Activated CD4-positive, alpha-beta T cell treated with anti-CD3 and anti-CD28 coated beads, Interleukin-2, amount 10 ng/mL, durations not matched to agents 24 days and 14 days (primary cell): ENCODE measurements at regions of chr3 and their contacts with region 1.

Region 1: GRCh38 chr3:56801662-56802377 is at the start of gene ARHGEF3:
- DNase-seq: peak; percentile 94
- H3K4me3 Mint-ChIP-seq: peak within 1 kb of the TSS; percentile 97
- H3K27ac Mint-ChIP-seq: peak within 1 kb of the TSS; percentile 87
- H3K4me1 Mint-ChIP-seq: peaks cover 47% of the 10 kb centered on the region
- H3K27me3 Mint-ChIP-seq: no peaks in the 10 kb centered on the region
- total RNA-seq, gene ARHGEF3: 52.7 and 54.4 TPM in 2 replicates

Region 2: GRCh38 chr3:56556908-56557830 is 244.7 kb before region 1 on chr3 and contains the start of gene CCDC66:
- intact Hi-C with region 1: loop called (anchors 5 kb)
- DNase-seq: peak; percentile 97
- H3K4me3 Mint-ChIP-seq: peak within 1 kb of the TSS; percentile 92
- H3K27ac Mint-ChIP-seq: peak within 1 kb of the TSS; percentile 94
- H3K4me1 Mint-ChIP-seq: peaks cover 19% of the 10 kb centered on the region
- H3K27me3 Mint-ChIP-seq: peaks cover 19% of the 10 kb centered on the region
- total RNA-seq, gene CCDC66: 36.8 and 37.8 TPM in 2 replicates

Region 3: GRCh38 chr3:56702490-56703315 is 99.1 kb before region 1 on chr3:
- intact Hi-C with region 1: loop called (anchors 1 kb)
- DNase-seq: peak; percentile 87
- H3K4me3 Mint-ChIP-seq: no peak overlapping the region
- H3K27ac Mint-ChIP-seq: no peak overlapping the region
- H3K4me1 Mint-ChIP-seq: peaks cover 27% of the 10 kb centered on the region
- H3K27me3 Mint-ChIP-seq: no peaks in the 10 kb centered on the region

Region 4: GRCh38 chr3:56753206-56753820 is 48.5 kb before region 1 on chr3:
- intact Hi-C with region 1: loop called (anchors 1 kb)
- DNase-seq: peak; percentile 82
- H3K4me3 Mint-ChIP-seq: peak overlapping the region; percentile 67
- H3K27ac Mint-ChIP-seq: peak overlapping the region; percentile 80
- H3K4me1 Mint-ChIP-seq: peaks cover 62% of the 10 kb centered on the region
- H3K27me3 Mint-ChIP-seq: no peaks in the 10 kb centered on the region

Region 5: GRCh38 chr3:56772952-56773938 is 28.6 kb before region 1 on chr3:
- intact Hi-C with region 1: no loop called
- DNase-seq: no peak
- H3K4me3 Mint-ChIP-seq: no peak overlapping the region
- H3K27ac Mint-ChIP-seq: peak overlapping the region; percentile 58
- H3K4me1 Mint-ChIP-seq: peaks cover 56% of the 10 kb centered on the region
- H3K27me3 Mint-ChIP-seq: no peaks in the 10 kb centered on the region

Region 6: DNA sequence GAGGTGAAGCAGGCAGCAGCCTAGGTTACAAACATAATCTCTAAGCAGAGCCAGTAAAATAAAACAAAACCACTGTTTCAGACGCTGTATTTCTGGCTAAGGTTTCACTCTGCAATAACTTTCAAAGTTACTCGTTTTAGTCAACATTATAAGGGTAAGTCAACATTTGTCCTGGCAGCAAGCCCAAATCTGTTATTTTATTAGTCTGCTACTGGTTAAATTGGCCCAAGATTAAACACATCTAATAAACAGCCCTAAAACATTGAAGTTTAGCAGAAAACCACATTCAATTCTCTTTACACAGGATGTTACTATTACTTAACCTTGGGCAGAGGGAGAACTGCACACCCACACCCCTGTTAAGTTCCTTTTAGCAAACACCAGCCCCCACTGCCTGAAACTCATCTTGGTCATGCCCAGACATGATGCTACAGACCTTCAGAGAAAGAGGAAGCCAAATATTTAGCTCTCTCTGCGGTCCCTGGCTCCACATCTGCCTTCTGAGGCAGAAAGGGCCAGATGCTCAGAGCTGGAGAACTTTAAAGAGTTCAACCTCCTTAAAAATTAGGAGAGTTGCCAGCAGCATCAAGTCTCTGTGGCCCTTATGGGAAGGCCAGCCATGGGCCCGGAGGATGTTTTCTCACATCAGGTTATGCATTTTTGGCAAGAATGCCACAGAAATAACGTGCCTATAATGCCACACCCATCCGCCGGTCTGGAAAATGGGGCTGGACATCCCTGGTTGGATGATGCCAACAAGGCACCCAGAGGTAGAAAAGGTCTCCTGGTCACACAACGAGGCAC is 18.0 kb before region 1 on chr3:
- intact Hi-C with region 1: loop called (anchors 1 kb)
- DNase-seq: peak; percentile 92
- H3K4me3 Mint-ChIP-seq: peak overlapping the region; percentile 75
- H3K27ac Mint-ChIP-seq: peak overlapping the region; percentile 95
- H3K4me1 Mint-ChIP-seq: peaks cover 87% of the 10 kb centered on the region
- H3K27me3 Mint-ChIP-seq: no peaks in the 10 kb centered on the region

Region 7: GRCh38 chr3:56862352-56863074 is 60.7 kb after region 1 on chr3:
- intact Hi-C with region 1: loop called (anchors 1 kb)
- DNase-seq: no peak
- H3K4me3 Mint-ChIP-seq: peak overlapping the region; percentile 45
- H3K27ac Mint-ChIP-seq: peak overlapping the region; percentile 79
- H3K4me1 Mint-ChIP-seq: peaks cover 59% of the 10 kb centered on the region
- H3K27me3 Mint-ChIP-seq: no peaks in the 10 kb centered on the region

Region 8: DNA sequence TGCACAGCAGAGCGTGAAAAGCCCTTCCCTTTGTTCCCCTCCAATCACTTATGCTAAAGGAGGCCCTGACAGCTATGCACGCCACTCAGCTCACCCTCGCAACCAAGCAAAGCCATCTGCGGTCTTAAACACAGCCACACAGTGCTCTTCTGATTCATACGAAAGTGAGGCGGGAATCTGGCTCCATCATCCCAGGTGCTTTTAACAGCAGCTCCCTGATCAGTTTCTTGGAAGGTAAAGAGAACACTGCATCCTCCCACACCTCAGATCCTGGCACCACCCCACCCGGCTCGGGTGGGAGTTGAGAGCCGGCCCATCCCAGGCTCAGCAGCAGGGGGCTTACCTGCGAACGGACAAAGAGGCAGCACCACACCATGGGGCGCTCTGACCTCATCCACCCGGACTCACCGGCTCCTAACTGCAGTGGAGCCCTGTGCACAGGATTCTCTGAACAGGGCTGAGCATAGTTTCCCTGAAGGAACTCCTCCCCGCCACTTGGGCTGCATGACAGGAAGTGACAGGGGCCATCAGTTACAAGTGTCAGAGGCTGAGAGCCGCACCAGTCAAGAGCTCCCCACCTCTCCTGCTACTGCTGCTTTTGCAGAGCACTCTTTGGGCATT is 114.3 kb after region 1 on chr3:
- intact Hi-C with region 1: loop called (anchors 1 kb)
- DNase-seq: peak; percentile 93
- H3K4me3 Mint-ChIP-seq: peak overlapping the region; percentile 89
- H3K27ac Mint-ChIP-seq: peak overlapping the region; percentile 90
- H3K4me1 Mint-ChIP-seq: peaks cover 66% of the 10 kb centered on the region
- H3K27me3 Mint-ChIP-seq: no peaks in the 10 kb centered on the region

Region 9: DNA sequence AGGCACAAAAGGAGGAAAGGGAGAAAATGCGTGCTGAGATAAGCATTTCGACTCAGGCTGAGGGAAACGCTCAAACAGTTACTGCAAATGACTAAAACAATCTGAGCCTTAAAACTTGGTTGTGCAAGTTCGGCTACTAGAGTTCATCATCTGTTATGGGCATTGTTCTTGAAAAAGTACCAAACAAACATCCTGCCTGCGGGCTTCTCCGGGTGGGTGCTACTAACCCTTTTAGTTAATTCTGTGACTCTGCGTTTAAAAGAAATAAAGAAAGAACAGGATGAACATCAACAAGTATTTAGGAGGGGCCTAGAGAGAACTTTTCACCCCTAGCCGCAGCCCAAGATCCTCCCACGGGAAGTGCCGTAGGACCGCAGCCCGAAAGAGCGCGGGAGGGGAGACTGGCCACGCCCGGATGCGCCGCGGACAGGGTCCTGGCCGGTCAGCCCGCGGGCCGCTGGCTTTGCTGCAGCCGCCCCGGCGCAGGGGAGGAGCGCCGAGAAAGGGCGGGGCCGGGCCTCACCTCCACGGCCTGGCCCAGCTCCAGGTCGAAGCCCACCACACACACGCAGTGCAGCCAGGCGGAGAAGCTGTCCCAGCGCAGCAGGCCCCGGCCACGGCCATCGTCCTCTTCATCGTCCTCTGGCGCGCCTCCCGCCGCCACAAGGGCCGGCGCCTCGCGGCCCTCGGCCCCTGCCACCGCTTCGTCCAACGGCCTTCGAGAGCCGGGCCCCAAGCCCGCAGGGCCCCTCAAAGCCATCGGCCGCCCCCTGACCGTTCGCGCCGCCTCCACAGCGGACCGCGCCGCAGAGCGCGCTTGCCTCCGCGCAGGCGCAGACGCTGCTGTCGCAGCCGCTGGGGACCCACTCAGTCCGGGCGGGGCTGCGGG is 890.7 kb after region 1 on chr3 and contains the start of gene DENND6A:
- intact Hi-C with region 1: no loop called
- DNase-seq: peak; percentile 98
- H3K4me3 Mint-ChIP-seq: peak within 1 kb of the TSS; percentile 87
- H3K27ac Mint-ChIP-seq: peak within 1 kb of the TSS; percentile 96
- H3K4me1 Mint-ChIP-seq: peaks cover 22% of the 10 kb centered on the region
- H3K27me3 Mint-ChIP-seq: no peaks in the 10 kb centered on the region
- total RNA-seq, gene DENND6A: 20.8 and 25.2 TPM in 2 replicates